K562 (cell line): ENCODE measurements at regions of chr3 and their contacts with region 1.

Region 1: DNA sequence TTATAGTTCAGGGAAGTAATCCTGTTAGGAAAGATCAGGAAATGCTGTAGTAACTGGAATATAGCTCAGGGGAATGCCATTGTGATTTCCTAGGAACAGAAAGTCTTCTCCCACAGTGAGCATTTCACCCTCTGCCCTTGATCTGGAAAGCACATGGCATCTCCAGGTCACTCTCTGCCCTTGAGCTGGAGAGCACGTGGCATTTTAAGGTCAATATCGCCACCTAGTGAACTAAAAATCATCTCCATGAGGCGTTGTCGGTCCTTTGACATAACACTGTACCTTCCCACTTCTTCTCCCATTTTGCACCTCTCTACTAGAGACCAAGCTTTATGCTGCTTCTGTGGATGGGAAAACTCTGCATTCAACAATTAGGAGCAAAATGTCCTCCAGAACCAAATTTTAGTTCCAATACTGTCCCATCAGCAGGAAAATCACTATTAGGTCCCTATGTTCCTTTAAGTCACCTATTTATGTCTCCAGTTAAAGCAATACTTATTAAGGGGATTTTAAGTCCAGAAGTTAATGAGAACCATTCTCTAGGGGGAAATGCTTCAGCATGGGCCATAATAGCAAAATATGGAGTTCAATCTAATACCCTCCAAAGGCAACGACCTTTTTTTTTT is 54.7 kb upstream of the GK5 start:
- DNase-seq: peak; percentile 62 to 88 (median 70)
- ATAC-seq: peak; percentile 97
- H3K4me3 ChIP-seq: no peak overlapping the region
- H3K27ac ChIP-seq: peak overlapping the region; percentile 16; the same call in 1 of the 3 replicates
- H3K4me1 ChIP-seq: peaks cover 0 to 6% of the 10 kb centered on the region in 2 experiments; a peak in 2 of 5 replicates
- H3K27me3 ChIP-seq: no peaks in the 10 kb centered on the region
- CTCF ChIP-seq: peak; percentile 80 to 85 (median 83)
- EP300 ChIP-seq: no peak; the same call in 1 of the 2 replicates
- POLR2A ChIP-seq: no peak
- RAD21 ChIP-seq: peak; percentile 90 to 96

Region 2: DNA sequence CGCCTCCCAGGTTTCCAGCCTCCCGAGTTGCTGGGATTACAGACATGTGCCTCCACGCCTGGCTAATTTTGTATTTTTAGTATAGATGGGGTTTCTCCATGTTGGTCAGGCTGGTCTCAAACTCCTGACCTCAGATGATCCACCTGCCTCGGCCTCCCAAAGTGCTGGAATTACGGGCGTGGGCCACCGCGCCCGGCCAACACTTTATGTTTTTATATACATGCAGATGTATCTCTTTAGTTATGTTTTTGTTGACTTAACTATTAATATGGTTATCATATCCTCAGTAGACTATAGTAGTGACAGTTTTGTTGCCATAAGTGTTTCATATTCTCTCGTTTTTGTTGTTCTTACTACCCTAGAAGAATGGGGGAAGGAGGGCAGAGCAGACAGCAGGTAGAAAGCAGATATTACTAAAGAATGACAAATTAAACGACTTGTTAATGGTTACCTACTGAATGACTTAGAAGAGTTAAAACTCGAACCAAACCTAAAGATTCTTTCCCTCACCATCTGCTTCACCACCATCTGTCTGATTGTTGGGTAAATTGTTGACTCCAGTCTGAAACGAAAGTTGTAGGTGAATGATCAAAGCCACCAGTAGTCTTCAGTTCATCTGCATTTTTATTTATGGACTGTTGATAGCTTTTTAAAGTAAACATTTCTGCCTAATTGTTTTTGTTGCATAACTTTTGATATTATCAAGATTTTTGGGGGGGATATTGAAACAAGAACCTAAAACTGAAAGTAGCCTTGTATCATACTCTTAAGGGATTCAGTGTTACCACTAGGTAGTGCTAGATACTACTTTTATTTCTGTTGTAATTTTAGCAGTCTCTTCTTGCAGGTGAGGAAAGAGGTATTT is 704.0 kb before region 1 on chr3:
- CTCF ChIA-PET with region 1: no interaction called
- POLR2A ChIA-PET with region 1: no interaction called
- in situ Hi-C with region 1: no loop called
- intact Hi-C with region 1: loop called (anchors 10 kb)
- DNase-seq: peak in 2 of 4 experiments; percentile 10 to 15
- ATAC-seq: peak; percentile 83
- H3K4me3 ChIP-seq: no peak overlapping the region
- H3K27ac ChIP-seq: no peak overlapping the region
- H3K4me1 ChIP-seq: no peaks in the 10 kb centered on the region
- H3K27me3 ChIP-seq: no peaks in the 10 kb centered on the region
- CTCF ChIP-seq: peak in 2 of 3 experiments; percentile 19 to 62; a peak in 4 of 6 replicates
- EP300 ChIP-seq: 0 out of 2 replicates have a peak, but pooled peaks have one; percentile 27
- POLR2A ChIP-seq: no peak
- RAD21 ChIP-seq: peak; percentile 66 to 68

Region 3: DNA sequence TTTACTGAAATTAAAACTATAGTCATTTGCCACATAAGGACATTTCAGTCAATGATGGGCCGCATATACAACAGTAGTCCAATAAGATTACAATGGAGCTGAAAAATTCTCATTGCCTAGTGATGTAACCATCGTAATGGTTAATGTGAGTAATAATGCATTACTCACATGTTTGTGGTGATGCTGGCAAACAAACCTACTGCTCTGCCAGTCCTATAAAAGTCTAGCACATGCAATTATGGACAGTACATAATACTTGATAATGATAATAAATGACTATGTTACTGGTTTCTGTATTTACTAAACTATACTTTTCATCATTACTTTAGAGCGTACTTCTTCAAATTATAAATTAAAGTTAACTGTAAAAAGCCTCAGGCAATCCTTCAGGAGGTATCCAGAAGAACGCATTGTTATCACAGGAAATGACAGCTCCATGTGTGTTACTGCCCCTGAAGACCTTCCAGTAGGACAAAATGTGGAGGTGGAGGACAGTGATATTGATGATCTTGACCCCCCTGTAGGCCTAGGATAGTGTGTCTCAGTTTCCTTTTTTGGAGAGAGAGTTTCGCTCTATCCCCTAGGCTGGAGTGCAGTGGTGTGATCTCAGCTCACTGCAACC is 300.9 kb before region 1 on chr3:
- CTCF ChIA-PET with region 1: no interaction called
- POLR2A ChIA-PET with region 1: no interaction called
- in situ Hi-C with region 1: no loop called
- intact Hi-C with region 1: no loop called
- DNase-seq: no peak
- ATAC-seq: no peak
- H3K4me3 ChIP-seq: no peak overlapping the region
- H3K27ac ChIP-seq: no peak overlapping the region
- H3K4me1 ChIP-seq: no peaks in the 10 kb centered on the region
- H3K27me3 ChIP-seq: no peaks in the 10 kb centered on the region
- CTCF ChIP-seq: no peak
- EP300 ChIP-seq: no peak
- POLR2A ChIP-seq: no peak
- RAD21 ChIP-seq: no peak

Region 4: GRCh38 chr3:142022381-142022780 is 257.7 kb before region 1 on chr3:
- CTCF ChIA-PET with region 1: interaction called, 6 read pairs
- POLR2A ChIA-PET with region 1: no interaction called
- in situ Hi-C with region 1: loop called (anchors 5 kb)
- intact Hi-C with region 1: loop called (anchors 1 kb)
- DNase-seq: peak; percentile 35 to 89 (median 56)
- ATAC-seq: peak; percentile 82
- H3K4me3 ChIP-seq: no peak overlapping the region
- H3K27ac ChIP-seq: peak overlapping the region; percentile 45; the same call in 2 of the 3 replicates
- H3K4me1 ChIP-seq: peaks cover 22 to 29% of the 10 kb centered on the region in 2 experiments; a peak in 4 of 5 replicates
- H3K27me3 ChIP-seq: no peaks in the 10 kb centered on the region
- CTCF ChIP-seq: peak; percentile 71 to 83 (median 72); a peak in 5 of 6 replicates
- EP300 ChIP-seq: peak; percentile 91
- POLR2A ChIP-seq: no peak
- RAD21 ChIP-seq: peak; percentile 94

Region 5: DNA sequence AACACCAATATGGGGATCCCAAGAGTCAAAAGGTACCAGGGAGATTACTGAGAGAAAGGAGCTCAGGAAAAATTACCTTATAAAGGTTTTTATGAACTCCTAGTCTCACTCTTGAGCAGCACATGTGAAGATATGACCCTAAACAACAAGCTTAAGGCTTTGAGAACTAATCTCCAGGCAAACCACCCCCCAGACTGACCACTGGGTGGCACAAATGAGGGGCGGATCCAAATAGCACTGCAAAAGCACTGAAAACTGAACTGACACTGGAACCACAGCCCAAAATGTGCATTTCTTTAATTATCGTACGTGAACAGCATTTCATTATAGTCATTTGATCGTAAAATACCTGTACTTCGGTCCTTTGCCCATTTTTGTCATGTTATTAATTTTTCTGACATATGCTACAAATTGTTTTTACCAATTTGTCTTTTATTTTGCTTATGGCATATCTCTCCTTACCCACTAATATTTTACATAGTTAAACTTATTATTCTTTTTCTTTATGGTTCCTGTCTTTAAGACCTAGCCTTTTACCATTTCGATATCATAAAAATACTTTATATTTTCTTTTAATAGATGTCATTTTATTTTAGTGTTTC is 99.2 kb before region 1 on chr3:
- CTCF ChIA-PET with region 1: interaction called, 4 read pairs
- POLR2A ChIA-PET with region 1: no interaction called
- in situ Hi-C with region 1: no loop called
- intact Hi-C with region 1: loop called (anchors 2 kb)
- DNase-seq: peak; percentile 35 to 61 (median 52)
- ATAC-seq: peak; percentile 92
- H3K4me3 ChIP-seq: no peak overlapping the region
- H3K27ac ChIP-seq: no peak overlapping the region
- H3K4me1 ChIP-seq: no peaks in the 10 kb centered on the region
- H3K27me3 ChIP-seq: no peaks in the 10 kb centered on the region
- CTCF ChIP-seq: peak; percentile 67 to 75 (median 73)
- EP300 ChIP-seq: no peak
- POLR2A ChIP-seq: no peak
- RAD21 ChIP-seq: peak; percentile 12 to 66; a peak in 2 of 4 replicates

Region 6: DNA sequence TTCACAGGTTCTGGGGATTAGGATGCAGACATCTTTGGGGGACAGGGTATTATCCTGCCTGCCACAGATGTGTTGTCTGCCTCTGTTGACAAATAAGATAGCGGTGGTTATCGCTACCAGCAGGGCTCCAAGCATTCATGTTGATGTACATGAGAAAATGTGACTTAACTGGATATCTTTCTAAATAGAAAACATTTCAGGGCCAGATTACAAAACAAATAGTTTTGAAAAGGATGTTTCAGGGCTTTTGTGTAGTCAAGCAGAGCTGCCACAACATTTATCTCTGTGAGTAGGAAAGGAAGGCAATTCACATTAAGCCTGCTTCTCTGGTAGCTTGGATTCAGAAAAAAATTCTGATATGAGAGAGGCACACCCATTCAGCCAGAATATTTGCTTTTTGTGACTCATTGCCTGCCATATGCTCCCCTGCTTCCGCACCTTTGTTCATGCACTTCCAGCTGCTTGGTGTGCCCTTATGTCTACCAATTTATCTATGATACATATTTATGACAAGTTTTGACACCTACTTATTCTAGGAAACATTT is 338.9 kb after region 1 on chr3:
- CTCF ChIA-PET with region 1: no interaction called
- POLR2A ChIA-PET with region 1: no interaction called
- in situ Hi-C with region 1: no loop called
- intact Hi-C with region 1: no loop called
- DNase-seq: peak; percentile 24 to 61 (median 38)
- ATAC-seq: peak; percentile 82
- H3K4me3 ChIP-seq: no peak overlapping the region
- H3K27ac ChIP-seq: peak overlapping the region; percentile 21; the same call in 1 of the 3 replicates
- H3K4me1 ChIP-seq: peaks cover 0 to 19% of the 10 kb centered on the region in 2 experiments; a peak in 2 of 5 replicates
- H3K27me3 ChIP-seq: no peaks in the 10 kb centered on the region
- CTCF ChIP-seq: no peak
- EP300 ChIP-seq: peak; percentile 80
- POLR2A ChIP-seq: no peak
- RAD21 ChIP-seq: no peak